CD4-positive, alpha-beta memory T cell (primary cell): ENCODE measurements at regions of chr3 and their contacts with region 1.

Region 1: GRCh38 chr3:101779047-101779821 is at the start of gene NXPE3:
- DNase-seq: peak; percentile 92 to 95 (median 94)
- H3K4me3 ChIP-seq: peak within 1 kb of the TSS; percentile 63 to 90
- H3K4me3 Mint-ChIP-seq: peak within 1 kb of the TSS; percentile 89 to 98 (median 96)
- H3K27ac ChIP-seq: peak within 1 kb of the TSS; percentile 91
- H3K27ac Mint-ChIP-seq: peak within 1 kb of the TSS; percentile 97 to 99 (median 99)
- H3K4me1 ChIP-seq: peaks cover 49% of the 10 kb centered on the region
- H3K4me1 Mint-ChIP-seq: peaks cover 35 to 62% (median 47%) of the 10 kb centered on the region in 4 donors
- H3K27me3 ChIP-seq: no peaks in the 10 kb centered on the region
- H3K27me3 Mint-ChIP-seq: no peaks in the 10 kb centered on the region
- total RNA-seq, gene NXPE3: 35.7 to 37.2 TPM

Region 2: GRCh38 chr3:99817437-99818240 is 1961.6 kb before region 1 on chr3 and contains the start of gene CMSS1:
- CTCF ChIA-PET with region 1: no interaction called
- POLR2A ChIA-PET with region 1: no interaction called
- intact Hi-C with region 1: loop called (anchors 5 kb)
- DNase-seq: peak; percentile 96 to 98 (median 96)
- H3K4me3 ChIP-seq: peak within 1 kb of the TSS; percentile 59 to 73
- H3K4me3 Mint-ChIP-seq: peak within 1 kb of the TSS; percentile 93 to 98 (median 96)
- H3K27ac ChIP-seq: peak within 1 kb of the TSS; percentile 80
- H3K27ac Mint-ChIP-seq: peak within 1 kb of the TSS; percentile 99 to 100 (median 100)
- H3K4me1 ChIP-seq: peaks cover 20% of the 10 kb centered on the region
- H3K4me1 Mint-ChIP-seq: peaks cover 25 to 40% (median 34%) of the 10 kb centered on the region in 4 donors
- H3K27me3 ChIP-seq: no peaks in the 10 kb centered on the region
- H3K27me3 Mint-ChIP-seq: no peaks in the 10 kb centered on the region
- total RNA-seq, gene CMSS1: 18.3 to 20.5 TPM

Region 3: GRCh38 chr3:101685870-101686412 is 93.3 kb before region 1 on chr3:
- CTCF ChIA-PET with region 1: no interaction called
- POLR2A ChIA-PET with region 1: interaction called, 14 read pairs
- intact Hi-C with region 1: loop called (anchors 2 kb)
- DNase-seq: no peak
- H3K4me3 ChIP-seq: peak overlapping the region; percentile 73 to 97
- H3K4me3 Mint-ChIP-seq: peak overlapping the region; percentile 99 to 100 (median 100)
- H3K27ac ChIP-seq: peak overlapping the region; percentile 90
- H3K27ac Mint-ChIP-seq: peak overlapping the region; percentile 98 to 100 (median 99)
- H3K4me1 ChIP-seq: peaks cover 42% of the 10 kb centered on the region
- H3K4me1 Mint-ChIP-seq: peaks cover 20 to 53% (median 33%) of the 10 kb centered on the region in 4 donors
- H3K27me3 ChIP-seq: no peaks in the 10 kb centered on the region
- H3K27me3 Mint-ChIP-seq: no peaks in the 10 kb centered on the region

Region 4: DNA sequence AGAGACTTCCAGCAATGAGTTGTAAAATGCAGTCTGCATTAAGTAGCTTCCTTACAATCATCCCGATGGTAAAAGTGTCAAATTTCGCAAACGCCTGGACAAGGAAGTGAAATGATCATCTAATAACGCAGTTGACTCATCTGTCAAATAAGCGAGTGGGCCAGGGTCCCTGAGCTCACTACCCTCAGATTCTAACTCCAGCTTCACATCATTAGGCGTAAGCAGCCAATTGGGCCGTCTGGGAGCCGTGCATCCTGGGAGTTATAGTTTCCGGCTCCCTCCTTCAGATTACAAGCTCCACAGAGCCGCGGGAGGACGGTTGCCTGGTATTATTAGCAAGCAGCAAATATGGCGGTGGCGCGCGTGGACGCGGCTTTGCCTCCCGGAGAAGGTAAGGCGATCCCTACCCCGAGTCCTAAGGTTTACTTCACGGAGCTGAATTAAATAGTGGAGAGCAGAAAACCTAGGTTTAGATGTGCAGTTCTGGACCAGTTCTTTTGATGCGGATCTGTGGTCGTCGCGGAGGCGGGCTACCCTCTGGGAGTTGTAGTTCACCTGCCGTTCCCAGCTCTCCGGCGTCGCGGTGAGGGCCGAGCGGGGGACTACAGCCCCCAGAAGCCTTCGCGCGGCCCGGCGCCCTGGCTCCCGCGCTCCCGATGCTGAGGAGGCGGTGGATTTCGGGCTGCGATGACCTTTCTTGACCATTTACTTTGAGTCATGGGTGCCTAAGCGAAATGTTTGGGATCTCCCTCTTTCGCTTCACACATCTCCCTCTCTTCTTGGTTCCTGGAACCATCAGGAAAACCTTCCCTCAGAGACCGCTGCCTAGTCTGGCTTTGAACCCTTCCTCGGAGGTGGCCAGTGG is 54.7 kb before region 1 on chr3 and contains the start of gene CEP97:
- CTCF ChIA-PET with region 1: interaction called, 19 read pairs
- POLR2A ChIA-PET with region 1: interaction called, 60 read pairs
- intact Hi-C with region 1: loop called (anchors 1 kb)
- DNase-seq: peak; percentile 87 to 92 (median 90)
- H3K4me3 ChIP-seq: peak within 1 kb of the TSS; percentile 97 to 99
- H3K4me3 Mint-ChIP-seq: peak within 1 kb of the TSS; percentile 98 to 100 (median 99)
- H3K27ac ChIP-seq: peak within 1 kb of the TSS; percentile 90
- H3K27ac Mint-ChIP-seq: peak within 1 kb of the TSS; percentile 92 to 99 (median 99)
- H3K4me1 ChIP-seq: peaks cover 52% of the 10 kb centered on the region
- H3K4me1 Mint-ChIP-seq: peaks cover 31 to 56% (median 37%) of the 10 kb centered on the region in 4 donors
- H3K27me3 ChIP-seq: no peaks in the 10 kb centered on the region
- H3K27me3 Mint-ChIP-seq: no peaks in the 10 kb centered on the region
- total RNA-seq, gene CEP97: 14.8 to 16.8 TPM

Region 5: DNA sequence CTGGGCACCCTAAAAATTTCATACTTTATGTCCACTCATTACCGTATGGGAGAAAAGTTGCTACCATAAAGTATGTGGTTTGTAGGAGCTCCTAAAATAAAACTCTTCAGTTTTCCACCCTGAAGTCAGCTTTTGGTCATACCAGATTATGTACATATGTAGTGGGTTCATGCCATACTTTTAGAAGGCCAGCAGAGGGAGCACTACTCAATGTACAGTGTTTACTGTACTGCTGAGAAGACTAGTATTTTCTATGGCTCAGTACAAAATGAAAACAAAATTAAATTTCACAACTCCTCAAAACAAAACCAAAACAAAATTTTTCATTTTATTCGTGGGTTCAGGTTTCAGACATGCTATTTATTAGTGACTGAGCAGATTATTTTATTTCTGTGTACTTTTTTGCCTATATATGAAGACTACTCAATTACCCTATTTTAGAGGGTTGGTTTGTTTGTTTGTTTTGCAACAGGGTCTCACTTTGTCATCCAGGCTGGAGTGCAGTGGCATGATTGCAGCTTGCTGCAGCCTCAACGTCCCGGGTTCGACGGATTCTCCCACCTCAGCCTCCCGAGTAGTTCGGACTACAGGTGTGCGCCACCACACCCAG is 24.0 kb after region 1 on chr3:
- CTCF ChIA-PET with region 1: interaction called, 19 read pairs
- POLR2A ChIA-PET with region 1: interaction called, 5 read pairs
- intact Hi-C with region 1: no loop called
- DNase-seq: peak; percentile 64 to 77 (median 71)
- H3K4me3 ChIP-seq: no peak overlapping the region
- H3K4me3 Mint-ChIP-seq: peak overlapping the region in 4 of 8 donors; percentile 8 to 66 (median 32)
- H3K27ac ChIP-seq: peak overlapping the region; percentile 18
- H3K27ac Mint-ChIP-seq: peak overlapping the region; percentile 56 to 85 (median 66)
- H3K4me1 ChIP-seq: peaks cover 13% of the 10 kb centered on the region
- H3K4me1 Mint-ChIP-seq: peaks cover 14 to 36% (median 20%) of the 10 kb centered on the region in 4 donors
- H3K27me3 ChIP-seq: no peaks in the 10 kb centered on the region
- H3K27me3 Mint-ChIP-seq: no peaks in the 10 kb centered on the region

Region 6: DNA sequence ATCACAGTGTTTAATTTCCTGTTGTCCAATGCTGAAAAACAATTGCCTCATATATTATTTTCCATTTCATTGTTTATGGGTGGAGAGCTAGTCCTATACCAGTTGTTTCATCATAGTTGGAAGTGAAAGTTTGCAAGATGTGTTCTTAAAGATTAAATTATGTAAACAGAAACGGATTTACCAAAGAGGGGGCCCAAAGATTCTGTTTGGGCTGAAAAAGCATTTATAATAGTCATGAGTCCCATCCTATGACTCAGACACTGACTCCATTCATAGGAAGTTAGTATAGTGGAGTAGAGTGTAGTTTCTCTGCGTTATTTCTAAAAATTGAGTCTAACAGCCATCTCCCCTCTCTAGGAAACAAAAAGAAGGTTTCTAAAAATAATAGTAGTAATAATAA is 94.4 kb after region 1 on chr3:
- CTCF ChIA-PET with region 1: no interaction called
- POLR2A ChIA-PET with region 1: no interaction called
- intact Hi-C with region 1: no loop called
- DNase-seq: no peak
- H3K4me3 ChIP-seq: no peak overlapping the region
- H3K4me3 Mint-ChIP-seq: no peak overlapping the region
- H3K27ac ChIP-seq: no peak overlapping the region
- H3K27ac Mint-ChIP-seq: no peak overlapping the region
- H3K4me1 ChIP-seq: no peaks in the 10 kb centered on the region
- H3K4me1 Mint-ChIP-seq: peaks cover 0 to 3% (median 0%) of the 10 kb centered on the region in 4 donors
- H3K27me3 ChIP-seq: no peaks in the 10 kb centered on the region
- H3K27me3 Mint-ChIP-seq: no peaks in the 10 kb centered on the region